ENCODE measurements at regions of chr11 and their contacts with region 1.

Region 1: GRCh38 chr11:111766093-111766833 is at the start of gene PPP2R1B:
- DNase-seq: peak; percentile 43 to 86
- H3K4me3 ChIP-seq: peak within 1 kb of the TSS; percentile 83 to 97 (median 91)
- H3K27ac ChIP-seq: peak within 1 kb of the TSS; percentile 93
- H3K4me1 ChIP-seq: peaks cover 0 to 9% (median 5%) of the 10 kb centered on the region in 4 experiments; a peak in 4 of 7 replicates
- H3K27me3 ChIP-seq: no peaks in the 10 kb centered on the region
- CTCF ChIP-seq: no peak
- EP300 ChIP-seq: no peak
- POLR2A ChIP-seq: peak in 1 of 2 experiments; percentile 75; a peak in 2 of 3 replicates
- RAD21 ChIP-seq: no peak
- total RNA-seq, gene PPP2R1B: 86.2 and 87.0 TPM in 2 replicates

Region 2: DNA sequence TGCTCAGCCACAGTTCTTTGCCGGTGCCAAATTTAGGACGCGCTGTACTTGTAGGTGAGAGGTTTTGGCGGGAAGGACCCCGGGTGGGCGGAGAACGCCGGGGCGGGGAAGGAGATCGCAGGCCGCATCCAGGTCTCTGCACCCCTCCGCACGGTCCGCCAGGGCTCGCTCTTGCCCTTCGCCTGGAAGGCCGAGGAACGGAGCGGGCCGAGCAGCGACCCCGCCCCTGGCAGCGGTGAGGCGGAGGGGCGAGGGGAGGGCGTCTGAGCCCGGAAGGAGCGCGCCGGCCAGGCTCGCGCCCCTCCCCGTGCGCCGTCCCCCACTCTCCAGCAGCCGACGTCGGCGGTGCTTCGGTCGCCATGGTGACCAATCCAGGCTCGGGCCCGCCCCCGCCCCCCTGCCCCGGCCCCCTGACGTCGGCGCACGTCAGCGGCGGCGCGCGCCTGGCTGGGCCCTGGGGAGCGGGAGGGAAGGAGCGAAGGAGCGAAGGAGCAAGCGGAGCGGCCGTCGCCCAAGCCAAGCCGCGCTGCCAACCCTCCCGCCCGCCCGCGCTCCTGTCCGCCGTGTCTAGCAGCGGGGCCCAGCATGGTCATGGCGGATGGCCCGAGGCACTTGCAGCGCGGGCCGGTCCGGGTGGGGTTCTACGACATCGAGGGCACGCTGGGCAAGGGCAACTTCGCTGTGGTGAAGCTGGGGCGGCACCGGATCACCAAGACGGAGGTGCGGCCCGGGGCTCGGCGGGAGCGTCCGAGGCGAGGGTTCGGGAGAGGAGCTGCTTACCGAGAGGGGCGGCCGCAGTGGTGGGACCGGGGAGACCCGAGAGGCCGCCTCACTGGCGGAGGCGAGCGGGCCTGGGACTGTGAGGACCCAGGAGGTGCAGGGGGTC is 164.0 kb before region 1 on chr11 and contains the start of gene SIK2:
- CTCF ChIA-PET with region 1: interaction called, 18 read pairs
- POLR2A ChIA-PET with region 1: interaction called, 9 read pairs
- DNase-seq: peak; percentile 92
- H3K4me3 ChIP-seq: peak within 1 kb of the TSS; percentile 62 to 96 (median 77)
- H3K27ac ChIP-seq: peak within 1 kb of the TSS; percentile 45; the same call in 1 of the 2 replicates
- H3K4me1 ChIP-seq: peaks cover 0 to 10% (median 3%) of the 10 kb centered on the region in 4 experiments; a peak in 2 of 7 replicates
- H3K27me3 ChIP-seq: peaks cover 0 to 18% (median 12%) of the 10 kb centered on the region in 4 experiments; a peak in 5 of 7 replicates
- CTCF ChIP-seq: peak; percentile 93 to 97 (median 96)
- EP300 ChIP-seq: peak in 1 of 2 experiments; percentile 39; a peak in 1 of 3 replicates
- POLR2A ChIP-seq: 0 out of 3 replicates have a peak, but pooled peaks of 1 of the 2 experiments have one; percentile 53
- RAD21 ChIP-seq: peak; percentile 99
- total RNA-seq, gene SIK2: 8.8 and 12.7 TPM in 2 replicates

Region 3: DNA sequence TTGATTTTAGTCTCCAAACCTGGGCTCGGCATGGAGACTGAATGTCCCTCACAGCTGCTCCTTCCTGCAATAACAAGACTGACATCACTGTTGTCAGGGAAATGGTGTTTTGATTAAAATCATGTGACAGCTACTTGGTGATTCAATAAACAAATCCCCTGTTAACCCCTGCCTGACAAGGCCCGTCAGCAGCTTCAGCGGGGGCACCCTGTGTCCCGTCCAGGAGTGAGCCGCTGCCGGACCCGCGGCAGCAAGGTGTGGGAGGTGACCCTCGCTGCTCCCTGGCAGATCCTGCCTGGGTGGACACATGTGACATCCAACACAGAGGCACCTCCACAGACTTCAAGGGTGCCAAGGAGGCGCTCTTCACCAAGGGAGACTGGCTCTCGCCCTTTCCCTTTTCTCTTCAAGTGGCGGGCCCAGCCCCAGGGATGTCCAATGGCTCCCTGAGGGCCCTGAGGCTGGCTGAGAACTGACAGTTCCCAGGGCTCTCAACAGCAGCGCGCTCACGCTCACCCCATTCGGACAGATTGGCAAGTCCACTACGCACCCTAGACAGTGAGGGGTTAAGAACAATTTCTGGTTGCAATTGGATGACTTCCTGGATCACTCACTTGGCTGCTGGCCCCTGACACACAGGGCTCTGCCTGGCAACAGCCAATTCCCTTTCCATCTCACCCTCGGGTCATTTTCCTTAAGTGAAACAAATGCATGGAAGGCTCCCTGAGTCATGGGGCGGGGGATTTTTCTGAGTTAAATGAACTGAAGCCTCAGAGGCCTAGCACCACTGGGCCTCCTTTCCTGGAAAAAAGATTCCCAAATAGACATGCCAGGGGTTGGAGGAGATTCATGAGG is 30.8 kb before region 1 on chr11:
- CTCF ChIA-PET with region 1: interaction called, 4 read pairs
- POLR2A ChIA-PET with region 1: interaction called, 19 read pairs
- DNase-seq: no peak
- H3K4me3 ChIP-seq: no peak overlapping the region
- H3K27ac ChIP-seq: no peak overlapping the region
- H3K4me1 ChIP-seq: peaks cover 0 to 18% (median 7%) of the 10 kb centered on the region in 4 experiments; a peak in 6 of 7 replicates
- H3K27me3 ChIP-seq: no peaks in the 10 kb centered on the region
- CTCF ChIP-seq: no peak
- EP300 ChIP-seq: no peak
- POLR2A ChIP-seq: no peak
- RAD21 ChIP-seq: no peak

Region 4: DNA sequence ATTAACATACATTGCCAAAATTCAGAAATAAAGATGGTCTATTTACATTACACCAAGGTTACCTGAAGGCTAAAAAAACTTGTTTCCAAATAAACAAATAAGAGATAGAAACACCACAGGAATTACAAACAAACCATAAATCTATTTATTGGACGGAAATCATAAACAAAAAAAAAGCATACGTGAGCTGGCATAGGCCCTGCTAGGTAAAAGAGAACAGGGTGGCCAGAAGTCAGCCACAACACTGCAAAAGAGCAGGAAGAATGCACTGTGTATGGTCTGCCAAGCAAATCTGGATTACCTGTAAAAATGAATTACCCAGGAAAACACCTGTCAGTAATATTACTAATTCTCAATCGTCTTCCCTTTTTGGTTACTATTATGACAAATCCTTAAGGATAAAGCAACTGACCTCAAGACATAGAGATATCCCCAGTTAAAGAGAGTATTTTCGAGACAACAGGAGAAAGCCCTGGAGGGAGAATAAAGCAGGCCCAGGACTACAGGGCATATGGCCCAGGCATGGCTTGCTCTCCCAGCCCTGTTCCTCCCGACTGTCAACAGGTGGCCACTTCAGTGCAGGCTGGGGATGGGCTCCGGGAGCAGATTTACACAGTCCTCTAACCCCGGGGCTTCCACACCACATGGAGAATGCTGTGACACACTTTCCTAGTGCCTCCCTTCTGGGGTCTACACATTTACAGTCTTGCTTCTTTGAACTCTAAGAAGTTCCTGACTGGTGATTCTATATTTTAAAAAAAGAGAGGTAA is 18.0 kb before region 1 on chr11:
- CTCF ChIA-PET with region 1: interaction called, 3 read pairs
- POLR2A ChIA-PET with region 1: interaction called, 10 read pairs
- DNase-seq: no peak
- H3K4me3 ChIP-seq: no peak overlapping the region
- H3K27ac ChIP-seq: no peak overlapping the region
- H3K4me1 ChIP-seq: no peaks in the 10 kb centered on the region
- H3K27me3 ChIP-seq: no peaks in the 10 kb centered on the region
- CTCF ChIP-seq: no peak
- EP300 ChIP-seq: no peak
- POLR2A ChIP-seq: no peak
- RAD21 ChIP-seq: no peak

Region 5: GRCh38 chr11:111756097-111756496 is 10.2 kb before region 1 on chr11:
- CTCF ChIA-PET with region 1: interaction called, 3 read pairs
- POLR2A ChIA-PET with region 1: interaction called, 23 read pairs
- DNase-seq: no peak
- H3K4me3 ChIP-seq: no peak overlapping the region
- H3K27ac ChIP-seq: no peak overlapping the region
- H3K4me1 ChIP-seq: no peaks in the 10 kb centered on the region
- H3K27me3 ChIP-seq: no peaks in the 10 kb centered on the region
- CTCF ChIP-seq: no peak
- EP300 ChIP-seq: no peak
- POLR2A ChIP-seq: no peak
- RAD21 ChIP-seq: no peak

Region 6: DNA sequence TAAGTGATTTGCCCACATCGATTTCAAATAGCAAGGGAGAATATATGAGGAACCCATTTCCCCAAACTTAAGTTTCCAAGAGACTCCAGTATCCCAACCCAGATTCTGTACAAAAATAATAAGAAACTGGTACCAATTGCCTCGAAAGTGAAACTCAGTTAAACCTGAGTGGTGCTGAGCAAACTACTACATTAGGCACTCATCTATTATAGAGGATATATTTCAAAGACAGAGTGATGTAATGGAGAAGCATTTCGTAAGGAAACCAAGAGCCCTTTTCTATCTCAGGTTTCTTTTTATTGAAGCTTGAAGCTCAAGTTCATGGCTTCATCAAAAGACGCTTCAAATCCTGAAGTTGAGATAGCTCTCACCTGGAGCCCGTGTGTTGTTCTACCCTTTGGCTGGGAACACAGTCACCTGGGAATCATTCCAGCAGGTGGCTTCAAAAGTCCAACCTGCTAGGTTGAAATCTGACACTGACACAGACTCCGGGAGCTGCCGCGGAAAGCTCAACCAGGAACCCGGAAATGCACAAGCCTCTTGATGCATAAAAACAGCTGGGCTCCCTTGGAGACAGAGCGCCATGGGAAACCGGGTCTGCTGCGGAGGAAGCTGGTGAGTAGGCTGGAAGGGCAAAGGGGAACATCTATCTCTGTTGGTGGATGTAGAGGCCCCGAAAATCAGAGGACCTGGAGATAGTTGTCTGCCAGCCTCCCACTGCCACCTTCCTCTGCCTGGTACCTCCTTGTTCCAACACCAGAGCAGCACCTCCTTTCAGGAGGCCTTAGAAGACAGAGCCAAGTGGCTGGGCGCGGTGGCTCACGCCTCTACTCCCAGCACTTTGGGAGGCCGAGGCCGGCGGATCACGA is 152.4 kb after region 1 on chr11 and contains the start of gene C11orf52:
- CTCF ChIA-PET with region 1: no interaction called
- POLR2A ChIA-PET with region 1: no interaction called
- DNase-seq: peak; percentile 49 to 69
- H3K4me3 ChIP-seq: peak within 1 kb of the TSS; percentile 7 to 41 (median 20); a peak in 3 of 8 replicates
- H3K27ac ChIP-seq: peak within 1 kb of the TSS; percentile 26; the same call in 1 of the 2 replicates
- H3K4me1 ChIP-seq: peaks cover 0 to 6% (median 4%) of the 10 kb centered on the region in 4 experiments; a peak in 5 of 7 replicates
- H3K27me3 ChIP-seq: no peaks in the 10 kb centered on the region
- CTCF ChIP-seq: peak; percentile 1 to 20 (median 9); a peak in 2 of 4 replicates
- EP300 ChIP-seq: 0 out of 3 replicates have a peak, but pooled peaks of 1 of the 2 experiments have one; percentile 29
- POLR2A ChIP-seq: no peak
- RAD21 ChIP-seq: peak in 1 of 2 experiments; percentile 30; a peak in 1 of 4 replicates
- total RNA-seq, gene C11orf52: 1.7 and 2.2 TPM in 2 replicates